Caco-2 (cell line): ENCODE measurements at regions of chr11 and their contacts with region 1.

Region 1: GRCh38 chr11:68297812-68298658 is 14.4 kb upstream of the LRP5 start:
- DNase-seq: peak; percentile 96 to 98
- H3K4me3 ChIP-seq: peak overlapping the region; percentile 26
- H3K4me3 Mint-ChIP-seq: peak overlapping the region; percentile 73
- H3K27ac Mint-ChIP-seq: peak overlapping the region; percentile 89
- H3K4me1 ChIP-seq: peaks cover 37% of the 10 kb centered on the region
- H3K4me1 Mint-ChIP-seq: peaks cover 27% of the 10 kb centered on the region
- H3K27me3 ChIP-seq: no peaks in the 10 kb centered on the region
- H3K27me3 Mint-ChIP-seq: no peaks in the 10 kb centered on the region
- CTCF ChIP-seq: peak; percentile 100

Region 2: DNA sequence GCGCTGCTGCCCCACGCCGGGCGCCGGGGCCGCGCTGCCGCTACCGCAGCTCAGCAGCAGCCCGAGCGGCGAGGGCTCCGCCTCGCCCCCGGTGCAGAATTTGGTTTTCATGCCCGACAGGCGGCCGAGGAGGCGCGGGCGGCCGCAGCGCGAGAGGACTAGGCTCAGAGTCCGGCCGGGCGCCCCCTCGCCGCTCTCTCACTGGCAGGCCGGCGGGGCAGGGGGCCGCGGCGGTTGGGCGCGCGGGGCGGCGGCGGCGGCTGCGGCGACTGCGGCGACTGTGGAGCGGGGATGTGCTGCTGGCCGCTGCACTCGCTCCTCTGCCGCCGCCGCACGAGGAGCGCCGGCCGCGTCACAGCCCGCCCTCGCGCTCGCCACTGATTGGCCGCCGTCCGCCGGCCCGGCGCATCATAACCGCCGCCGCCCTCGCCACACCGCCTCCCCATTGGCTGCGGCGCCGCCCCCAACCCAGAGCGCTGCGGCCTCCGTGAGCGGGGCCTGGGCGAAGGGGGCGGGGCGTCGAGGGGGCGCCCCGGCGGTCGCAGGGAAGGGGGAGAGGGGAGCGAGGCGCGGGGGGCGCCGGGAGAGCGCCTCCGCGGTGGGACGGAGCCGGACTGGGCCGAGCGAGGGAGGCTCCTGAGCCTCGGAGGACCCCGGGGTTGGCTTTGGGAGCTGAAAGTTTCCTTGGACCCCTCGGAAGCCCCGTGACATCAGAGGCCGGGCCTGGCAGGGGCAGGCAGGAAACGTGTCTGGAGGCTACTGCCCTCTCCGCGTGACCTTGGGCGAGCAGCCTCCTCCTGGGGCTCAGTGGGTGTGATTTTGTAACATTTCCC is 176.8 kb before region 1 on chr11 and contains the start of gene CHKA:
- CTCF ChIA-PET with region 1: no interaction called
- POLR2A ChIA-PET with region 1: no interaction called
- intact Hi-C with region 1: loop called (anchors 10 kb)
- DNase-seq: peak; percentile 96 to 99
- H3K4me3 ChIP-seq: peak within 1 kb of the TSS; percentile 64
- H3K4me3 Mint-ChIP-seq: peak within 1 kb of the TSS; percentile 82
- H3K27ac Mint-ChIP-seq: peak within 1 kb of the TSS; percentile 96
- H3K4me1 ChIP-seq: peaks cover 76% of the 10 kb centered on the region
- H3K4me1 Mint-ChIP-seq: peaks cover 45% of the 10 kb centered on the region
- H3K27me3 ChIP-seq: no peaks in the 10 kb centered on the region
- H3K27me3 Mint-ChIP-seq: no peaks in the 10 kb centered on the region
- CTCF ChIP-seq: peak in 1 of 2 experiments; percentile 5
- total RNA-seq, gene CHKA: 169 TPM in 2 replicates

Region 3: GRCh38 chr11:68257475-68258362 is 40.3 kb before region 1 on chr11:
- CTCF ChIA-PET with region 1: interaction called, 100 read pairs
- POLR2A ChIA-PET with region 1: interaction called, 11 read pairs
- intact Hi-C with region 1: loop called (anchors 2 kb)
- DNase-seq: peak; percentile 97 to 98
- H3K4me3 ChIP-seq: no peak overlapping the region
- H3K4me3 Mint-ChIP-seq: no peak overlapping the region
- H3K27ac Mint-ChIP-seq: peak overlapping the region; percentile 40
- H3K4me1 ChIP-seq: peaks cover 23% of the 10 kb centered on the region
- H3K4me1 Mint-ChIP-seq: peaks cover 22% of the 10 kb centered on the region
- H3K27me3 ChIP-seq: no peaks in the 10 kb centered on the region
- H3K27me3 Mint-ChIP-seq: no peaks in the 10 kb centered on the region
- CTCF ChIP-seq: peak; percentile 95 to 96

Region 4: GRCh38 chr11:68312780-68313573 is 14.9 kb after region 1 on chr11:
- CTCF ChIA-PET with region 1: interaction called, 14 read pairs
- POLR2A ChIA-PET with region 1: interaction called, 5 read pairs
- intact Hi-C with region 1: no loop called
- DNase-seq: peak; percentile 52 to 55
- H3K4me3 ChIP-seq: peak overlapping the region; percentile 89
- H3K4me3 Mint-ChIP-seq: peak overlapping the region; percentile 91
- H3K27ac Mint-ChIP-seq: peak overlapping the region; percentile 89
- H3K4me1 ChIP-seq: peaks cover 22% of the 10 kb centered on the region
- H3K4me1 Mint-ChIP-seq: peaks cover 44% of the 10 kb centered on the region
- H3K27me3 ChIP-seq: no peaks in the 10 kb centered on the region
- H3K27me3 Mint-ChIP-seq: no peaks in the 10 kb centered on the region
- CTCF ChIP-seq: no peak

Region 5: DNA sequence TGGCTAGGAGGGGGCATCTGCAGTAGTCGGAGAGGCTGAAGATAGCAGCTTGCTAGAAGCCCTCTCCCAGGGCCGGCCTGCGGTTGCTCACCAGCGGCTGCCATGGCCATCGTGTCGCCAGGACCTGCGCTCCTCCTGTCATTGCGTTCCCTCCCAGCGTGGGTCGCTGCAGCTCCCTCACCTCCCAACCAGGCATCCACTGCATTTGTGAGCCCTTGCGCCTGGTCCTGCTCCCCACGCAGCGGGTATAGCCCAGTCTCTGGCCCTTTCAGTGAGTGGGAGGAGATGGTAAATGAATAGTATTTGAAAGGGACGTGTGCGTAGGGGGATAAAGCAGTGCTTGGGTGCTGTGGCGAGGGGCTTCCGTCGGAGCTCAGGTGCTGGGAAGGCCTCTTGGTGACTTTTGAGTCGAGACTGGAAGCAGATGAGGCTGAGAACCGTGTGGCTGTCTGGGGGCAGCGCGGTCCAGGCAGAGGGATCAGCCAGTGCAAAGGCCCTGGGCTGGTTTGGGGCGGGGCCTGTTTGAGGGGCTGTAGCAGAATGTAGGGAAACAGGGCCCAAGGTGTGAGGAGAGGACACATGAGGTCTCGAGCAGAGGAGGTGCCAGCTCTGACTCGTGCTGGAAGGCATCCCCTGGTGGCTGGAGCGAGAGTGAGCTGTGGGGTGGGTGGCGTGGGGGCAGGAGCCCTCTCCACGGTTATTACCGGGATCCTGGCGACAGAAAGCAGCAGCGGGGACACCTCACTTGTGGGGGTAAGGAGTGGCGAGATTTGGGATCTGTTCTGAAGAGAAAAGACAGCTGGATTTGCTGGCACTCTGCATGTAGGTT is 53.6 kb after region 1 on chr11:
- CTCF ChIA-PET with region 1: no interaction called
- POLR2A ChIA-PET with region 1: no interaction called
- intact Hi-C with region 1: no loop called
- DNase-seq: no peak
- H3K4me3 ChIP-seq: no peak overlapping the region
- H3K4me3 Mint-ChIP-seq: no peak overlapping the region
- H3K27ac Mint-ChIP-seq: peak overlapping the region; percentile 19
- H3K4me1 ChIP-seq: peaks cover 13% of the 10 kb centered on the region
- H3K4me1 Mint-ChIP-seq: peaks cover 19% of the 10 kb centered on the region
- H3K27me3 ChIP-seq: no peaks in the 10 kb centered on the region
- H3K27me3 Mint-ChIP-seq: no peaks in the 10 kb centered on the region
- CTCF ChIP-seq: no peak

Region 6: GRCh38 chr11:68383976-68384501 is 86.0 kb after region 1 on chr11:
- CTCF ChIA-PET with region 1: interaction called, 28 read pairs
- POLR2A ChIA-PET with region 1: interaction called, 7 read pairs
- intact Hi-C with region 1: loop called (anchors 2 kb)
- DNase-seq: peak; percentile 80 to 88
- H3K4me3 ChIP-seq: no peak overlapping the region
- H3K4me3 Mint-ChIP-seq: no peak overlapping the region
- H3K27ac Mint-ChIP-seq: peak overlapping the region; percentile 53
- H3K4me1 ChIP-seq: peaks cover 37% of the 10 kb centered on the region
- H3K4me1 Mint-ChIP-seq: peaks cover 44% of the 10 kb centered on the region
- H3K27me3 ChIP-seq: no peaks in the 10 kb centered on the region
- H3K27me3 Mint-ChIP-seq: no peaks in the 10 kb centered on the region
- CTCF ChIP-seq: peak; percentile 99